ENCODE measurements at regions of chr1 and their contacts with region 1.

Region 1: GRCh38 chr1:17125756-17126237 is 6.5 kb upstream of the PADI2 start:
- DNase-seq: peak; percentile 90 to 94 (median 91)
- ATAC-seq: peak; percentile 99
- H3K4me3 ChIP-seq: no peak overlapping the region
- H3K27ac ChIP-seq: no peak overlapping the region
- H3K4me1 ChIP-seq: no peaks in the 10 kb centered on the region
- H3K27me3 ChIP-seq: peaks cover 26 to 35% of the 10 kb centered on the region in 2 experiments
- CTCF ChIP-seq: peak; percentile 97 to 99 (median 98)
- EP300 ChIP-seq: 0 out of 2 replicates have a peak, but pooled peaks have one; percentile 9
- POLR2A ChIP-seq: no peak
- RAD21 ChIP-seq: peak; percentile 96 to 99

Region 2: DNA sequence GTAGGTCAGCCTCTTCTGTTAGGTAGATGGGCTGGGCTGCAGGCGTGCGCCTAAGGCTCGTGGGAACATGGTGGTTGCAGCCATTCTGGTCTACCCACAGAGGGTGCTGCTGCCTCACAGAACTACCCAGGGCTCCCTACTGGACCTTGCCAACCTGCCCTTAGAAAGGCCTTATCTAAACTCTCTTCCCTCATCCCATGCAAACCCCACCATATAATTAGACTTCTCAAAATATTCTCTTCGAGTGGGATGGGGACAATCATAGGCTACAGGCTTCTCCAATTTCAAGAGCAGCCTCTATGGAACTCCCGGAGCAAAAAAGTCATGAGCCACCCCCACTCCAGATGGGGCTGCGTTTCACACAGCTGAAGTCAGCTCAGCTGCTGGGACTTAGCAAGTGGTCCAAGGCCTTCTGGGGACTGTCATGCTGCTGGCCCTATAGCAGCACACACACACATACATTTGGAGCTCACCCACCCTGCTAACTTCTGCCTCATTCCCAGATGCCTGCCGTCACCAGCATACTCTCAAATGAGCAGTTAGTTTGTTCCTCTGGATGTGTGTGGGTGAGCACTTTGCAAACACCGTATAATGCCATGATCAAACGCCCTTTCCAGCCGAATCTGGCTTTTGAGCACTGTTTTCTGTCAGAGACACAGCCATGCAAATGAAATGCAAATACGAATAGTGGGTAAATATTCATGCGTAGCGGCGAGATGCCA is 65.9 kb before region 1 on chr1:
- CTCF ChIA-PET with region 1: interaction called, 4 read pairs
- POLR2A ChIA-PET with region 1: interaction called, 3 read pairs
- in situ Hi-C with region 1: no loop called
- intact Hi-C with region 1: loop called (anchors 2 kb)
- DNase-seq: peak; percentile 60 to 78 (median 72)
- ATAC-seq: peak; percentile 98
- H3K4me3 ChIP-seq: no peak overlapping the region
- H3K27ac ChIP-seq: no peak overlapping the region
- H3K4me1 ChIP-seq: peaks cover 0 to 5% of the 10 kb centered on the region in 2 experiments; a peak in 3 of 5 replicates
- H3K27me3 ChIP-seq: peaks cover 11 to 15% of the 10 kb centered on the region in 2 experiments; a peak in 4 of 5 replicates
- CTCF ChIP-seq: peak; percentile 87 to 96 (median 92)
- EP300 ChIP-seq: no peak
- POLR2A ChIP-seq: no peak
- RAD21 ChIP-seq: peak; percentile 79 to 92

Region 3: DNA sequence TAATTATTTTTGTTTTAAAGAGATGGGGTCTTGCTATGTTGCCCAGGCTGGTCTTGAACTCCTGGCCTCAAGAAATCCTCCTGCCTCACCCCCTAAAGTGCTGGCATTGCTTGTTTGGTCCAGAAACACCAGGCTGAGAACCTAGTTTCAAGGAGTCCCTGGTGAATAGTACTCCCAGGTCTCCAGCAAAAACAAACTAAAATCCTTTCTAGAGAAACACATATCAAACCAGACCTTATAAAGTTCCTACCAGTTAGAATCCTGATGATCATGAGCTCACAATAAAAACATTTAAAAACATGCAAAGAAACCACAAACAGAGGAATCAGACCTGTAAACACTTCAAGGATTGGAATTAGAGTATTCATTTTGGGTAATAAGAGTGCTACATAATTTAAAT is 44.8 kb after region 1 on chr1:
- CTCF ChIA-PET with region 1: no interaction called
- POLR2A ChIA-PET with region 1: no interaction called
- in situ Hi-C with region 1: no loop called
- intact Hi-C with region 1: no loop called
- DNase-seq: no peak
- ATAC-seq: no peak
- H3K4me3 ChIP-seq: no peak overlapping the region
- H3K27ac ChIP-seq: no peak overlapping the region
- H3K4me1 ChIP-seq: no peaks in the 10 kb centered on the region
- H3K27me3 ChIP-seq: peaks cover 3 to 14% of the 10 kb centered on the region in 2 experiments; a peak in 3 of 5 replicates
- CTCF ChIP-seq: no peak
- EP300 ChIP-seq: no peak
- POLR2A ChIP-seq: no peak
- RAD21 ChIP-seq: no peak

Region 4: DNA sequence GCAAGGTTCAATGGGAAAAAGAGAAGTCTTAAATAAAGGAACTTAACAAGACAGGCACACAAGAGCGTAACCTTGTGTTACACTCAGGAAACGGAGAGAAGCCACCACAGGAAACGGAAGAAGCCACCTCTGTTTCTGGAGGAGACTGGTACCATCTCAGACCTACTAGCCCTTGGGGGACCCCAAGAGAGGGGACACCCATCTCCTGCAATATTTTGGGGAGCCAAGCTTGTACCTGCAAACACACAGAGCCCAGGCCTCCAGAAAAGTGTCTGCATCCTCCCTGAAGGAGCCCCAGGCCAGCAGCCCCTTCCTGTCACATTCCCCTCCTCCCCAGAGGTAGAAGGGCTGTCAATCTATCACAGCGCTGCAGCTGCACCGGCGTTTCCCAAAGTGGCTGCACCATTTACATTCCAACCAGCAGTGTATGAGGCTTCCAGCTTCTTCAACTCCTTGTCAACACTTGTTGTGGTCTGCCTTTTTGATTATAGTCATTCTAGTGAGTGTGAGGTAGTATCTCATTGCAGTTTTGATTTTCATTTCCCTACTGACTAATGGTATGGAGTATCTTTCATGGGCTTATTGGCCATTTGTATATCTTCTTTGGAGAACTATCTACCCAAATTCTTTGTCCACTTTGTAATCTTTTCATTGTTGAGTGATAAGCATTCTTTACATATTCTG is 56.1 kb after region 1 on chr1:
- CTCF ChIA-PET with region 1: no interaction called
- POLR2A ChIA-PET with region 1: no interaction called
- in situ Hi-C with region 1: no loop called
- intact Hi-C with region 1: no loop called
- DNase-seq: no peak
- ATAC-seq: no peak
- H3K4me3 ChIP-seq: no peak overlapping the region
- H3K27ac ChIP-seq: no peak overlapping the region
- H3K4me1 ChIP-seq: no peaks in the 10 kb centered on the region
- H3K27me3 ChIP-seq: peaks cover 2 to 13% of the 10 kb centered on the region in 2 experiments; a peak in 1 of 5 replicates
- CTCF ChIP-seq: no peak
- EP300 ChIP-seq: no peak
- POLR2A ChIP-seq: no peak
- RAD21 ChIP-seq: no peak

Region 5: GRCh38 chr1:17274186-17275170 is 148.7 kb after region 1 on chr1:
- CTCF ChIA-PET with region 1: interaction called, 6 read pairs
- POLR2A ChIA-PET with region 1: no interaction called
- in situ Hi-C with region 1: no loop called
- intact Hi-C with region 1: loop called (anchors 1 kb)
- DNase-seq: peak; percentile 78 to 88 (median 87)
- ATAC-seq: peak; percentile 98
- H3K4me3 ChIP-seq: no peak overlapping the region
- H3K27ac ChIP-seq: no peak overlapping the region
- H3K4me1 ChIP-seq: 0 out of 5 replicates have a peak, but pooled peaks cover 0 to 2% of the 10 kb centered on the region in 2 experiments
- H3K27me3 ChIP-seq: peaks cover 3 to 53% of the 10 kb centered on the region in 2 experiments; a peak in 4 of 5 replicates
- CTCF ChIP-seq: peak; percentile 89 to 95 (median 91)
- EP300 ChIP-seq: no peak
- POLR2A ChIP-seq: no peak
- RAD21 ChIP-seq: peak in 1 of 2 experiments; percentile 76; a peak in 2 of 4 replicates

Region 6: DNA sequence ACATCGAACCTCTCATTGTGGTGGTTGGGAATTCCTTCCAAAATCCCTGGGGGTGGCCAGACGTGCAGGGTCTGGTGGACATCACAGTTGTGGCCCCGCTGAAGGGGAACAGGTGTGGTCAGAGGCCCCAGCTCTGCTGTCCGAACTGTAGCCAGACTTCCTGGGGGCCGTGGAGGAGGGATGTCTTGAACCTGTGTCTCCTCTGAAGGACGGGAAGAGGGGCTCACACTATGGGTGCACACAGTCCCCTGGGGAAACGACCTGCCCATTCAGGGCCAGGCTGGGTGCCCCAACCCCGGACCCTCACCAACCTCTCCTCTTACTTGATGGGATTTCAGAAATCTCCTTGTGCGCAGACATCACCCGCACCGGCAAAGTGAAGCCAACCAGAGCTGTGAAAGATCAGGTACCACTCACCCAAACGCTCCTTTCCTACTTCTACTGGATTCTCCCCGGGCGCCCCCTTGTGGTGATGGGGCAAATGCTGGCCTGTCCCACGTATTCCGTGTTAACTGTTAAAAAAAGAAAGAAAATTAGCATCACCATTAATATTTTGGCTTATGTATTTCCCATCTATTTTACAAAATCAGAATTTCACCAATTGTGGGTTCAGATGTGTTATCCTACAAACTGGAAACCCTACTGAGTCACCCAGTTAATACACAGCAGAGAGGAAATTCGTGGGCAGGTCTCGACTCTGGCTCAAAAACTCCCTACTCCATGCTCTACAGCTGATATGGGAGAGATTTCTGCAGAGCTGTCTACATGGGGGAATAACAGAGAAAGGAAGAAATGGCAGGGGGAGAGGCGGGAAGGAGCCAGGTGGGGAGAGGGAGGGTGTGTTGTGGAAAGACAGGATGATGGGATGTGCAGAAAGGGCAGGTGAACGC is 210.3 kb after region 1 on chr1:
- CTCF ChIA-PET with region 1: interaction called, 11 read pairs
- POLR2A ChIA-PET with region 1: no interaction called
- in situ Hi-C with region 1: loop called (anchors 5 kb)
- intact Hi-C with region 1: loop called (anchors 2 kb)
- DNase-seq: peak; percentile 67 to 81 (median 72)
- ATAC-seq: peak; percentile 92
- H3K4me3 ChIP-seq: no peak overlapping the region
- H3K27ac ChIP-seq: no peak overlapping the region
- H3K4me1 ChIP-seq: no peaks in the 10 kb centered on the region; a peak in 1 of 5 replicates
- H3K27me3 ChIP-seq: peaks cover 25 to 51% of the 10 kb centered on the region in 2 experiments; a peak in 4 of 5 replicates
- CTCF ChIP-seq: peak; percentile 83 to 96 (median 91)
- EP300 ChIP-seq: no peak
- POLR2A ChIP-seq: no peak
- RAD21 ChIP-seq: peak; percentile 44 to 76

Region 7: GRCh38 chr1:17606826-17607440 is 481.1 kb after region 1 on chr1:
- CTCF ChIA-PET with region 1: interaction called, 4 read pairs
- POLR2A ChIA-PET with region 1: no interaction called
- in situ Hi-C with region 1: no loop called
- intact Hi-C with region 1: loop called (anchors 10 kb)
- DNase-seq: peak; percentile 77 to 85 (median 83)
- ATAC-seq: peak; percentile 87
- H3K4me3 ChIP-seq: no peak overlapping the region
- H3K27ac ChIP-seq: no peak overlapping the region
- H3K4me1 ChIP-seq: no peaks in the 10 kb centered on the region
- H3K27me3 ChIP-seq: peaks cover 13 to 48% of the 10 kb centered on the region in 2 experiments; a peak in 3 of 5 replicates
- CTCF ChIP-seq: peak; percentile 88 to 97 (median 97)
- EP300 ChIP-seq: no peak
- POLR2A ChIP-seq: no peak
- RAD21 ChIP-seq: peak; percentile 65 to 88

Measured in K562 (cell line).